ENCODE measurements at regions of chr7 and their contacts with region 1.

Region 1: DNA sequence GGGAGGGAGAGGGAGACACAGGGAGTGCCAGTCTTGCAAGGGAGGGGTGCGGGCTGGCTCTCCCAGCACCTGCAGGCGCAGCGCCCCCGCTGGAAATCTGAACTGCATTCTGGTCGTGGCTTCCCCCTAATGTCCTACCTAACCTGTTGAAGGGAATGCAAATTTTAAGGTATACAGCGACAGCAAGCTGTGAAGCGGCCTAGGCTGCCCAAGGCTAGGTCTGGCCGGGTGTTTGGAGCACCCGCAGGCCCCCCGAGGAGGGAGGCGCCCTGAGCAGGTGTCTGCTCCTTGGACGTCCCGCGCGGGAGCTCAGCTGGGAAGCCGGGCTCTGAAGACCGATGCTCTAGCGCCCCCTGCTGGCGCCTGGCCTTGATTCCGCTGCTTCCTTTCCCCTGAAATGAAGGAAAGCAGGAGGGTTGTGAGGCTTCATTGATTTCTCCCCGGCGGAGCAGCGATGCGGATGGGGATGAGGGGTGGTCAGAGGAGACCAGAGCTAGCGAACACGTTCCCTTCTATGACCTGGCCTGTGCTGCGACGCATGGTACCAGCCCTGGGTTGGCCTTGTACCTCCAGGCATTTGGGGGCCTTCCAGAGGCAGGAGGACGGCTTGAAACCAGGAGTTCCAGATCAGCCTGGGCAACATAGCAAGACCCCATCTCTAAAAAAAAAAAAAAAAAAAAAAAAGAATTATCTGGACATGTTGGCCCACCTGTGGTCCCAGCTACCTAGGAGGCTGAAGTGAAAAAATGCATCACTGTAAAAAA is 601.3 kb downstream of the GALNT17 start:
- DNase-seq: peak; percentile 80 to 86 (median 84)
- ATAC-seq: peak; percentile 88 to 95 (median 90)
- H3K4me3 ChIP-seq: peak overlapping the region in 1 of 3 donors; percentile 6
- H3K27ac ChIP-seq: no peak overlapping the region
- H3K4me1 ChIP-seq: peaks cover 0 to 5% (median 0%) of the 10 kb centered on the region in 4 donors
- H3K27me3 ChIP-seq: peaks cover 0 to 4% of the 10 kb centered on the region in 2 donors
- CTCF ChIP-seq: peak; percentile 74 to 97 (median 90)
- POLR2A ChIP-seq: no peak

Region 2: DNA sequence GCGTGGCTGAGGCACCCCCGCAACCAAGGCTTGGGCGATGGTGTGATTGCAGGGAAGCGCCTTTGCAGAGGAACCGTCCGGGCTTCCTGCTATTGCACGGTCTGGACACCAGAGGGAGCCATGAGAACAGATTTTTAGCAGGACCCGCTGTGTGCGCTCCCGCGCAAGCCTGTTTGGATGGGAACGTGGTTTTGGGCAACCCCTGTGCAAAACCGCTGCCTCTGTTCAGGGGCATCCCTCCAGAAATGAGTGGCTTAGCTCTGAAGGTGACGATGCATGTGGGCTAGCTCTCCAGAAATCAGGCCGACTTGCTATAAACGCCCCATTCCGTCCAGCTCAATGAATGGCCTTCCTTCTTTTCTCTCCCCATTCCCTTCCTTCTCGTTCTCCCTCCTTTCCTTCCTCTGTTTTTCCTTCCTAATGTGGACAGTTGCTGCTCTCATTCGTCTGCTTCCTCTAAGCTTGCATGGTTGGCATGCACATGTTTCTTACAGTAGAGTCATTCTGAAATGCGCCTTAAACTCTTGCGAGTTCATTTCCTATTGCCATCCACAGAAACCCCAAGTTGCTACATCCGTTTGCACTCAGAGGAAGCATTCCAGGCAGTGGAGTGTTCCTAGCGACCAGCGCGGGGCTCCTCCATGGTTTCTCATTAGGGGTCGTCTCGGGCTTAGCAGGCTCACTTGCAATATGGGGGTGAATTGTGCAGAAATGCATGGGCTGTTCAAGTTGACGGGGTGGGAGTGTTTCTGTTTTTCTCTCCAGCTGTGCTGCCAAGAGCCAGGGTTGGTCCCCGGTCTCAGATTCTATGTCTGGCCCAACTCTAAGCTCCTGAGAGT is 903.8 kb before region 1 on chr7:
- intact Hi-C with region 1: loop called in 1 of 2 experiments (anchors 10 kb)
- DNase-seq: peak; percentile 62 to 74 (median 71)
- ATAC-seq: peak; percentile 88 to 96 (median 91)
- H3K4me3 ChIP-seq: peak overlapping the region in 1 of 3 donors; percentile 10
- H3K27ac ChIP-seq: no peak overlapping the region
- H3K4me1 ChIP-seq: peaks cover 0 to 10% (median 5%) of the 10 kb centered on the region in 4 donors
- H3K27me3 ChIP-seq: no peaks in the 10 kb centered on the region
- CTCF ChIP-seq: peak; percentile 72 to 93 (median 84)
- POLR2A ChIP-seq: no peak

Region 3: DNA sequence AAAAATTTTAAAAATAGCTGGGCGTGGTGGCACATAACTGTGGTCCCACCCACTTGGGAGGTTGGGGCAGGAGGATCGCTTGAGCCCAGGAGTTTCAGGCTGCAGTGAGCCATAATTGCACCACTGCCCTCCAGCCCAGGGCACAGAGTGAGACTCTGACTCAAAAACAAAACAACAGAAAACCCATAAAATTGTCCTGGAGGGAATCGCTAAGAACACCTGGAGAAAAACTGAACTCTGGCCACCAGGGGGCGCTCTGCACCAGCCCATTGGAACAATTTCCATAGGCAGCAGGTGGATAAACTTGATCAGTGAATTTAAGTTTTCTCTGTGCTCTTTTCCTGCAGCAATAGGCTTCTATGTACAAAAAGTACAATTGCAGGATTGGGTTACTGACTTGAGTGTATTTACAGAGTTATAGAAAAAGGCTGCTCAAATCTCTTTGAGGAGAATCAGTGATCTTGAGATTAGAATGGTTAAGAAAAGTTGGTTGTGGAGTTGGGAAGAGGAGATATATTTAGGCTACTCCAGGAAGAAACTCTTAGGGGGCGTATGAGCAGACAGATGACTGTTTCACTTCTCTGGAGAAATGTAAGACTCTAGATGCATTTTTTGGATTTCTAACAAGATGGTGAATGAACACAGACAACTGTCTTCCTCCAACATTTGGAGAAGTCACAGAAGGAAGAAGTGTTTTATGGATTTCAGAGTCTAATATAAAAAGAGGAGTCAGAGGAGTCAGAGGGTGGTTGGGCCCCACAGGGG is 876.2 kb before region 1 on chr7:
- intact Hi-C with region 1: loop called (anchors 5 to 10 kb)
- DNase-seq: peak; percentile 65 to 70 (median 67)
- ATAC-seq: peak; percentile 57 to 64 (median 60)
- H3K4me3 ChIP-seq: no peak overlapping the region
- H3K27ac ChIP-seq: no peak overlapping the region
- H3K4me1 ChIP-seq: no peaks in the 10 kb centered on the region
- H3K27me3 ChIP-seq: no peaks in the 10 kb centered on the region
- CTCF ChIP-seq: peak; percentile 70 to 92 (median 91)
- POLR2A ChIP-seq: no peak

Measured in right lobe of liver (tissue), 6 donors.